ENCODE measurements at regions of chr18 and their contacts with region 1.

Region 1: GRCh38 chr18:29874519-29875098 is 1167.9 kb downstream of the DSC3 start:
- DNase-seq: peak in 1 of 10 donors; percentile 11

Region 2: DNA sequence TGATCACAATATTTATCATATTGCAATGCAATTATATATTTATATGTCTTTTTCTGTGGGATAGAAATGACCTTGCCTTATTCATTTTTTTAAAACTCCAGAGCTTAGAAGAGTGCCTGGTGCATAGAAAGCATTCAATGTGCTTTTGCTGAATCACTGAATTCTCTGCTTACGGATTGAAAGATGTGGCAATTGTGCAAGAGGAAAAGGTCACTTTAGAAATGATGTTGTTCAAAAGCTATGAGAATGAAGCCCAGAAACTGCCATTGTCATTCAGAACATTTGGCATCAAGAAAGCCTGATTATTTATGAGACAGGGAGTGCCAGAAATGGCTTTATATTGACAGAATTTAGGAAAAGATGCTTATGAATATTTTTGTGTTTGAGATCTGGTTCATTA is 1019.1 kb before region 1 on chr18:
- intact Hi-C with region 1: no loop called
- DNase-seq: no peak

Region 3: DNA sequence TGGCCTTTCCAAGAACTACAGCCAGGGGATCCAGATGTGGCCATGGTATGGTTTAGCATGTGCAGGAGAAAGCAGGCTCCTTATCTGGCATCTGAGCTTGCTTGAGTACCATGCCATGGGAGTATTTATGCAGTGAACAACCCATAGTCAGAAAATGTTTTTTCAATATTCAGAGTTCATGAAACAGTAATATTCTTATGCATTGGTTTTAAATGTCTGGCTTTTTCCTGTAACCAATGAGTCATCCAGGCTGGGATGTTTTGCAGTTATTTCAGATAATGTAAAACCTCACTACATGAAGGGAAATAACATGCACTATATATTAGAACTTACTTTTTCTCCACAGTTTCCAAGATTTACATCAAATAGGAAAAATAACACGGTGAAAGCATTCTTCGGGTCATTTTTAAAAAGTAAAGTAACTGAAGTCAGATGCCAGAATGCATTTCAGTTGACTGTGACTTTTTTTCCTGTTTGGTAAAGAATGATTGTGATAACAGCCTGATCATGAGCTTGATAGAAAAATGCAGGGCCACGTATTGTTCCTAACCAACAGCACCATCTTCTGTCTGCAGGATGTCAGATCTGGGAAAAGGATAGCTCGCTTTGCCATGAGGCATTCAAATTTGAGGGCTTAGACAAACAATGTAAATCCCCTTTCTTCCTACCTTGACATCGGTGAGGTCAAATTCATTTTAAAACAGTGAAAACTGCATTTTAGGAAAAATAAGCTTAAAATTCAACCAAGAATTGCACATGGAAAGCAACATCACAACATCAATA is 1015.1 kb after region 1 on chr18:
- intact Hi-C with region 1: loop called (anchors 2 kb)
- DNase-seq: peak in 4 of 10 donors; percentile 13 to 29 (median 22)

Region 4: GRCh38 chr18:30971338-30971956 is 1096.8 kb after region 1 on chr18:
- intact Hi-C with region 1: loop called (anchors 5 kb)
- DNase-seq: no peak

Measured in posterior cingulate gyrus (tissue), 11 donors.